HEK293 (cell line): ENCODE measurements at regions of chr2 and their contacts with region 1.

Region 1: GRCh38 chr2:143259368-143259958 is 130.2 kb downstream of the ARHGAP15 start:
- H3K4me3 ChIP-seq: no peak overlapping the region
- H3K27ac ChIP-seq: no peak overlapping the region
- H3K4me1 ChIP-seq: no peaks in the 10 kb centered on the region
- CTCF ChIP-seq: peak; percentile 52; the same call in 1 of the 2 replicates

Region 2: GRCh38 chr2:142868281-142868762 is 391.1 kb before region 1 on chr2:
- CTCF ChIA-PET with region 1: no interaction called
- POLR2A ChIA-PET with region 1: no interaction called
- H3K4me3 ChIP-seq: no peak overlapping the region
- H3K27ac ChIP-seq: no peak overlapping the region
- H3K4me1 ChIP-seq: no peaks in the 10 kb centered on the region
- CTCF ChIP-seq: no peak

Region 3: DNA sequence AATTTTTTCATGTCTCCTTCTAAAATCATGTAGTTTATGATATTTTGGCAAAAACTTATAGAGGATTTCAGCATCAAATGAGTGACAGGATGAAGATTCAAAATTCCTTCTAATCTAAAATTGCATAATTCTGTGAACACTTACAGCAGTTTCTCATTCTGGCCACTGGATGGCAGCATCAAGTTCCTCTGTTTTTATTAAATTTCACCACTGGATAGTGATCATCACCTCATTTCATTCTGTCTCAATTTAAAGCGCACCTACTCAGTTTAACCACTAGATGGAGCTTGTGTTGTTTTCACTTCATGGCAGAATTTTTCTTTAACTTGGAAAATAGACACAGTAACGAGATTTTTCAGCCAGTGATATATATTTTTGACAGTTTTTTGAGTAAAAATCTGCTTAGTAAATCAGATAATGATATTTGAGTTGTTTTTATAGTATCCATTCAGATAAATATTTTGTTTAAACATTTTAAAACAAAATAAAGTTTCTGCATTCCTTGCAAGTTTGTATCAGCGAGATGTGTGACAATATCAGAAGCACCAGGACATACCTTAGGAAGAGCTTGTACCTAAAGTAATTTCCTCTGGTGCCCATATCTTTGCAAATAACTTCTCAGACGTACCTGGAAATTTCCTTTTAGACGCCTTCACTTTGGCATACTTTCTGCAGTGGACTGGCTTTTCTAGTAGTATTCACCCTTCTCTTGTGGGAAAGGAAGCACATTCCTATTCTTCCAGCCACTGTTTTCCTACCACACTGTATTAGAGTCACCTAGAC is 225.0 kb before region 1 on chr2:
- CTCF ChIA-PET with region 1: interaction called, 10 read pairs
- POLR2A ChIA-PET with region 1: no interaction called
- H3K4me3 ChIP-seq: no peak overlapping the region
- H3K27ac ChIP-seq: no peak overlapping the region
- H3K4me1 ChIP-seq: no peaks in the 10 kb centered on the region
- CTCF ChIP-seq: peak; percentile 75

Region 4: DNA sequence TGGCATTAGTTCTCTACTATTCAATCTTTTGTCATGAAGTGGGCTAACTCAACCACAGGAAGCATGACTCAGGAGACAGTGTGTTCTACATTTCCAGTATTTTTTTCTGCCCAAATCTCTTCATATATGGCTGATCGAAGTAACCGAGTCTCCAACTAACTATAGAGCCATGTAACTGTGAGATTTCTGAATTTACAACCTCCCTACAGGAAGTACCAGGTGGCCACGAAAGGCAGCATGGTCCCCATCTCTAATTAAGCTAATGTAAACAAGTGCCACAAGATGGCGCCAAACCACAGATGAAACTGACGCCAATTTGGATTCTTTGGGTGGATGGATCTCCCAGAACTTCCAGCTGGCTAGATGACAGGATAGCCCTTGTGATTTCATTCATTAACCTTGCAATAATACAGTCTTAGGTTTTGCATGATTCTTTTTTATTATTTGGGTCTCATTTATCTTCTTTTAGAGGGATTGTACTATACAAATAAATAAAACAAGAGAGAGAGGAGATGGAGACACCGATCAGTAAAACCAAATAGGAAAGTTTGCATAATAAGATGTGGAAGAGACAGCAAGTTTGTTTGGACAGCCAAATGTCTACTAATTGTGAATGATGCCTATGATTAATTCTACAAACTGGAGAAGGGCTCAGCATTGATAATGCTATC is 148.6 kb before region 1 on chr2:
- CTCF ChIA-PET with region 1: interaction called, 55 read pairs
- POLR2A ChIA-PET with region 1: no interaction called
- H3K4me3 ChIP-seq: no peak overlapping the region
- H3K27ac ChIP-seq: no peak overlapping the region
- H3K4me1 ChIP-seq: no peaks in the 10 kb centered on the region
- CTCF ChIP-seq: peak; percentile 64; the same call in 1 of the 2 replicates

Region 5: GRCh38 chr2:143162123-143162837 is 97.2 kb before region 1 on chr2:
- CTCF ChIA-PET with region 1: interaction called, 68 read pairs
- POLR2A ChIA-PET with region 1: no interaction called
- H3K4me3 ChIP-seq: no peak overlapping the region
- H3K27ac ChIP-seq: no peak overlapping the region
- H3K4me1 ChIP-seq: peaks cover 17% of the 10 kb centered on the region
- CTCF ChIP-seq: peak; percentile 74

Region 6: GRCh38 chr2:143177096-143177786 is 82.2 kb before region 1 on chr2:
- CTCF ChIA-PET with region 1: interaction called, 10 read pairs
- POLR2A ChIA-PET with region 1: no interaction called
- H3K4me3 ChIP-seq: no peak overlapping the region
- H3K27ac ChIP-seq: no peak overlapping the region
- H3K4me1 ChIP-seq: no peaks in the 10 kb centered on the region
- CTCF ChIP-seq: no peak

Region 7: GRCh38 chr2:143217512-143218115 is 41.8 kb before region 1 on chr2:
- CTCF ChIA-PET with region 1: interaction called, 11 read pairs
- POLR2A ChIA-PET with region 1: no interaction called
- H3K4me3 ChIP-seq: no peak overlapping the region
- H3K27ac ChIP-seq: no peak overlapping the region
- H3K4me1 ChIP-seq: no peaks in the 10 kb centered on the region
- CTCF ChIP-seq: no peak

Region 8: GRCh38 chr2:143284087-143284675 is 24.7 kb after region 1 on chr2:
- CTCF ChIA-PET with region 1: interaction called, 13 read pairs
- POLR2A ChIA-PET with region 1: no interaction called
- H3K4me3 ChIP-seq: no peak overlapping the region
- H3K27ac ChIP-seq: no peak overlapping the region
- H3K4me1 ChIP-seq: no peaks in the 10 kb centered on the region
- CTCF ChIP-seq: peak; percentile 29; the same call in 1 of the 2 replicates